ENCODE measurements at regions of chr22 and their contacts with region 1.

Region 1: DNA sequence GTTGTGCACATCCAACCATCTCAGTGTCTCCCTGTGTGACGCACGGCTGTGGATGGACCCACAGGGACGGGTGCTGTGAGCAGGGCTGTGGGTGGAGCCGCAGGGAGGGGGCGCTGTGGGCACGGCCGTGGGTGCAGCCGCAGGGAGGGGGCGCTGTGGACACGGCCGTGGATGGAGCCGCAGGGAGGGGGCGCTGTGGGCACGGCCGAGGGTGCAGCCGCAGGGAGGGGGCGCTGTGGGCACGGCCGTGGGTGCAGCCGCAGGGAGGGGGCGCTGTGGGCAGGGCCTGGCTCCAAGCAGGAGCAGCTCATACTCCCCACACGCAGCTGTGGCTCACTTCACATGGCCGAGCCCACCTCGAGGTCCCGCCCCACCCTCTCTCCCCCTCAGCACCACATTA is 6.0 kb upstream of the MAPK11 start:
- DNase-seq: peak; percentile 66
- H3K4me3 ChIP-seq: no peak overlapping the region
- H3K27ac ChIP-seq: no peak overlapping the region
- H3K4me1 ChIP-seq: peaks cover 17% of the 10 kb centered on the region
- H3K27me3 ChIP-seq: no peaks in the 10 kb centered on the region
- CTCF ChIP-seq: peak; percentile 87

Region 2: DNA sequence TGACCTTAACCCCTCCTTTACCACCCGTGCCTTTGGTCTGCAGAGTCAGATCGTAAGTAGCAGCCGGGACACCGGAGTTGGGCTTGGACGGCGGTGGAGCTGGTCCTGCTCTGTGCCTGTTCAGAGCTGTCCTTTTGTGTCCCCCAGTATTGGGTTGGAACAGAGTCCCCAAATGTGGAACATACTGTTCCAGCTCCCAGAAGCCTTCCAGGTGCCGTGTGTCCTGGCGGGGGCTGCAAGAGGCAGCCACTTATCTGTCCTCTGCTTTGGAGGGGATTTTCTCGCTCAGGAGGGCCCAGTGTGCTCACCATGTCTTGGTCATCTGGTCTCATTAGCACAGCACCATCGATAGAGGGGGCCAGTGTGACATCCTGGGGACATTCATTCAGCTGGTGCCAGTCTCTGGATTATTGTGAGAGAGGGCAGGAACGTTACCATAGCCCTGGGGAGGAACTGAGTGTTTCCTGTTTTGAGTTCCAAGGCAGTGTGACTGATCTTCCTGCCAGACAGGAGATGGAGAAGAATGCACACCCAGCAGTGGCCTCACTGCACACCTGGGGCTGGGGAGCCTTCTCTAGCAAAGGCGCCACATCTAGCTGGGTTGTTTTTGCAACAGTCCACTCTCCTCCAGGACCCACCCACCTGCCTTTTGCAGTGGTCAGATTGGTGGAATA is 345.3 kb before region 1 on chr22:
- CTCF ChIA-PET with region 1: no interaction called
- POLR2A ChIA-PET with region 1: no interaction called
- intact Hi-C with region 1: no loop called
- DNase-seq: peak; percentile 88
- H3K4me3 ChIP-seq: no peak overlapping the region
- H3K27ac ChIP-seq: no peak overlapping the region
- H3K4me1 ChIP-seq: peaks cover 14% of the 10 kb centered on the region
- H3K27me3 ChIP-seq: no peaks in the 10 kb centered on the region
- CTCF ChIP-seq: peak; percentile 77

Region 3: DNA sequence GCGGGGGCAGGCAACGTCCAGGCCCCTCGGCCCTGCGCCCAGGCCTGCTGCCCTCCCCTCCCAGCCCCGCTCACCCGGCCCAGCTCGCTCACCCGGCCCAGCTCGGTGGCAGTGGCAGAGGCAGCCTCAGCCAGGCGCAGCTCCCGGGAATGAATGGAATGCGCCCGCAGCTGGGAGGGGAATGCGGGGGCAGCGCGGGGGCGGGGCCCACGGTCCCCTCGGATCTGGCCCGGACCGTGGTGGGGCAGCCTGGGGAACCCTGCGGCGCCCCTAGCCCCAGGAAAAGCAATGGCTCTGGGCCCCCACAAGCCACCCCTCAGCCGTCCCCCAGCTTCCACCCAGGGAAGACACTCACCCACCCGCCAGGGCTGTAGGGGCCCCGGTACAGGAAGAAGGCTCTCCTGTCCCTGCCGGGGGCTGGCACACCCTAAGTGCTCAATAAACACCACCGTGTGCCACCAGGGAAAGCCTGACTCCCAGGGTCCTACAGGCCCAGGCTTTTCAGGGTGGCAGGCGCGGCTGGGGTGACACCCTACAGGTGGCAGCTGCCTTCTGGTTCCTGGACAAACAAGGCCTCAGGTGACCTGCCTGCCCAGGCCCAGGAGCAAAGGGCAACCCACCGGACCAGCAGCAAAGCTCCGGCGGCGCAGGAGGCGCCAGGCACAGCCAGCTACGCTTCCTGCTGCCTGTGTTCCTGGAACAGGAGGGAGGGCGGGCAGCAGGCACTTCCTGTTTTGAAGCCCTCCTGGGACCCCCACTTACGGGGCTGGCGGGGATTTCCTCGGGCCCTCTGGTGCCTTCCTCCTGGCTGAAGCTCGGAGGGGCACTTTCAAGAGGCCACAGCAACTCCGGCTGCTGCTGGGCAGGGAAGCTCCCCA is 17.5 kb after region 1 on chr22:
- CTCF ChIA-PET with region 1: no interaction called
- POLR2A ChIA-PET with region 1: interaction called, 17 read pairs
- intact Hi-C with region 1: no loop called
- DNase-seq: peak; percentile 84
- H3K4me3 ChIP-seq: peak overlapping the region; percentile 41
- H3K27ac ChIP-seq: peak overlapping the region; percentile 93
- H3K4me1 ChIP-seq: peaks cover 43% of the 10 kb centered on the region
- H3K27me3 ChIP-seq: no peaks in the 10 kb centered on the region
- CTCF ChIP-seq: no peak

Region 4: GRCh38 chr22:50303848-50304527 is 27.8 kb after region 1 on chr22:
- CTCF ChIA-PET with region 1: interaction called, 11 read pairs
- POLR2A ChIA-PET with region 1: no interaction called
- intact Hi-C with region 1: no loop called
- DNase-seq: peak; percentile 48
- H3K4me3 ChIP-seq: no peak overlapping the region
- H3K27ac ChIP-seq: peak overlapping the region; percentile 95
- H3K4me1 ChIP-seq: peaks cover 73% of the 10 kb centered on the region
- H3K27me3 ChIP-seq: no peaks in the 10 kb centered on the region
- CTCF ChIP-seq: no peak

Region 5: GRCh38 chr22:50326959-50327710 is 51.0 kb after region 1 on chr22 and contains the start of gene DENND6B:
- CTCF ChIA-PET with region 1: interaction called, 9 read pairs
- POLR2A ChIA-PET with region 1: no interaction called
- intact Hi-C with region 1: loop called (anchors 2 kb)
- DNase-seq: peak; percentile 88
- H3K4me3 ChIP-seq: peak within 1 kb of the TSS; percentile 79
- H3K27ac ChIP-seq: peak within 1 kb of the TSS; percentile 94
- H3K4me1 ChIP-seq: peaks cover 10% of the 10 kb centered on the region
- H3K27me3 ChIP-seq: no peaks in the 10 kb centered on the region
- CTCF ChIP-seq: no peak; the same call in 1 of the 2 replicates
- total RNA-seq, gene DENND6B: 5.3 and 10.8 TPM in 2 replicates

Region 6: GRCh38 chr22:50341977-50342650 is 66.0 kb after region 1 on chr22:
- CTCF ChIA-PET with region 1: interaction called, 5 read pairs
- POLR2A ChIA-PET with region 1: no interaction called
- intact Hi-C with region 1: loop called (anchors 2 kb)
- DNase-seq: peak; percentile 94
- H3K4me3 ChIP-seq: peak overlapping the region; percentile 91
- H3K27ac ChIP-seq: peak overlapping the region; percentile 78
- H3K4me1 ChIP-seq: peaks cover 3% of the 10 kb centered on the region
- H3K27me3 ChIP-seq: no peaks in the 10 kb centered on the region
- CTCF ChIP-seq: peak; percentile 97

Region 7: GRCh38 chr22:50361688-50362087 is 85.5 kb after region 1 on chr22:
- CTCF ChIA-PET with region 1: no interaction called
- POLR2A ChIA-PET with region 1: no interaction called
- intact Hi-C with region 1: no loop called
- DNase-seq: no peak
- H3K4me3 ChIP-seq: no peak overlapping the region
- H3K27ac ChIP-seq: no peak overlapping the region
- H3K4me1 ChIP-seq: no peaks in the 10 kb centered on the region
- H3K27me3 ChIP-seq: no peaks in the 10 kb centered on the region
- CTCF ChIP-seq: no peak

Region 8: GRCh38 chr22:50498322-50498890 is 222.3 kb after region 1 on chr22:
- CTCF ChIA-PET with region 1: no interaction called
- POLR2A ChIA-PET with region 1: no interaction called
- intact Hi-C with region 1: loop called (anchors 10 kb)
- DNase-seq: peak; percentile 80
- H3K4me3 ChIP-seq: peak overlapping the region; percentile 31
- H3K27ac ChIP-seq: peak overlapping the region; percentile 17
- H3K4me1 ChIP-seq: peaks cover 5% of the 10 kb centered on the region
- H3K27me3 ChIP-seq: no peaks in the 10 kb centered on the region
- CTCF ChIP-seq: peak; percentile 83

Region 9: GRCh38 chr22:50684986-50685385 is 408.8 kb after region 1 on chr22:
- CTCF ChIA-PET with region 1: interaction called, 15 read pairs
- POLR2A ChIA-PET with region 1: no interaction called
- intact Hi-C with region 1: no loop called
- DNase-seq: no peak
- H3K4me3 ChIP-seq: no peak overlapping the region
- H3K27ac ChIP-seq: no peak overlapping the region
- H3K4me1 ChIP-seq: no peaks in the 10 kb centered on the region
- H3K27me3 ChIP-seq: no peaks in the 10 kb centered on the region
- CTCF ChIP-seq: no peak